ENCODE measurements at regions of chr2 and their contacts with region 1.

Region 1: GRCh38 chr2:24792874-24793760 is at the starts of genes CENPO and PTRHD1:
- DNase-seq: peak; percentile 95 to 98 (median 97)
- ATAC-seq: peak; percentile 98 to 99 (median 99)
- H3K4me3 ChIP-seq: peak within 1 kb of the TSS; percentile 30 to 97 (median 74)
- H3K27ac ChIP-seq: peak within 1 kb of the TSS; percentile 90 to 100 (median 98)
- H3K4me1 ChIP-seq: peaks cover 0 to 25% (median 5%) of the 10 kb centered on the region in 12 donors
- H3K27me3 ChIP-seq: no peaks in the 10 kb centered on the region
- CTCF ChIP-seq: peak; percentile 40 to 73 (median 62)
- POLR2A ChIP-seq: peak in 1 of 2 donors; percentile 62
- total RNA-seq, gene CENPO: 1.6 to 9.2 (median 2.7) TPM
- total RNA-seq, gene PTRHD1: 12.6 to 37.1 (median 31.1) TPM

Region 2: GRCh38 chr2:24771764-24772586 is 21.1 kb before region 1 on chr2:
- intact Hi-C with region 1: no loop called
- DNase-seq: no peak
- ATAC-seq: no peak
- H3K4me3 ChIP-seq: no peak overlapping the region
- H3K27ac ChIP-seq: no peak overlapping the region
- H3K4me1 ChIP-seq: peaks cover 0 to 12% (median 0%) of the 10 kb centered on the region in 12 donors
- H3K27me3 ChIP-seq: no peaks in the 10 kb centered on the region
- CTCF ChIP-seq: no peak
- POLR2A ChIP-seq: no peak

Region 3: DNA sequence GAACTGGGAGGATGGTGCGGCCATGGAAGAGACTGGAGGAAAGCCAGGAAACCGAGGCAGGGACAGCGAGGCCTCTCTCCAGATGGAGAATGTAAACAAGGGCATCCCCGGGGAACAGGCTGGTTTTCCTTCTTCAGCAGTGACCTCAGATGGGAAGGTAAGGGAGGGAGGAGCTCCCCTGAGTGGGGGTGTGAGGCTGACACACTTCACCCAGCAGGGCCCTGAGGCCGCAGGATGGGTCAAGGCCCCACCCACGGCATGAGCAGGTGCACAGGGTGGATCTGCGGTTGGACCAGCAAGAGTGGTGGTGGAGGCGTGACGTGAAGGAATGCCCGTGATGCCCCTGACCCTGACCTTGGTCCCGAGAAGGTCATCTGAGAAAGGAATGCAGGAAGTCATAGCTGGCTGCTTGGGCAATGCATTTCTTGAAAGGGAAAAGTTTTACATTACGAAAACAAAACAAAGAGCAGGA is 78.8 kb after region 1 on chr2:
- intact Hi-C with region 1: no loop called
- DNase-seq: peak in 2 of 5 donors; percentile 43 to 66
- ATAC-seq: peak in 3 of 4 donors; percentile 30 to 59 (median 41)
- H3K4me3 ChIP-seq: no peak overlapping the region
- H3K27ac ChIP-seq: peak overlapping the region in 10 of 12 donors; percentile 10 to 81 (median 48)
- H3K4me1 ChIP-seq: peaks cover 0 to 37% (median 10%) of the 10 kb centered on the region in 12 donors
- H3K27me3 ChIP-seq: no peaks in the 10 kb centered on the region
- CTCF ChIP-seq: no peak
- POLR2A ChIP-seq: no peak

Region 4: DNA sequence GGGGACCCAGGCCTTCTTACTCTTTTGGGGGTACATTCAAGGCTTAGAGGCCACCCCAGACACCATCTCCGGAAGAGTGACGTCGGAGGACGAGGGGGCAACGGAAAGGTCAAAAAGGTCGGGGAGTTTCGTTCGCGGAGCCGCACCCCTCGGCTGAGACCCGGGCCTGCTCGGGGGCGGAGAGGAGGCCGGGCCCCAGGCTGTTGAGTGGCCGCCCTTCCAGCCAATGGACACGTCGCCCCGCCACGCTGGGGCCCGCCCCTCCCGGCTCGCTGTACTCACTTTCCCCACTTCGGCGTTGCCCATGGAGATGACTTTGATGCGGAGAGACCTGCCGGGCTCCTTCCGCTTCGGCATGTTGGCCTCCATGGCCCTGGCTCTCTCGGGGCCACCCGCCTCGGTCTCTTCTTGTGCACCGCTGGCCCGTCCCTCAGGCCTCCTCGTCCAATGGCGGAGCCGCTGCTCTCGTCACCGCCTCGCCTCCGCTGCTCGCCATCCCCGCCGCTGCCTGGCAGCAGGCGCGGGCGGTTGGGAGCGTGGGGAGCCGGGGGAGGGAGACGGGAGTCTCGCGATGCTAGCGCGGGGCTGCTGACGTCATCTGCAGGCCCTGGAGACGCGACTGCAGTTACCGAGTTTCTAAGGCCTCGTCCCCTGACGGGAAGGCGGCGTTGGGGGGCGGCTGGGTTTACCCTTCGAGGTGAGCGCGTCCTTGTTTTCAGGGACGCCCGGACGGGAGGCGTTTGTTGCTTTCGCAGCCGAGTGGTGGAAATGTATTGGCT is 178.6 kb after region 1 on chr2 and contains the start of gene DNAJC27:
- intact Hi-C with region 1: loop called in 1 of 10 experiments (anchors 5 kb)
- DNase-seq: peak; percentile 98 to 99 (median 99)
- ATAC-seq: peak; percentile 95 to 97 (median 96)
- H3K4me3 ChIP-seq: peak within 1 kb of the TSS; percentile 70 to 94 (median 82)
- H3K27ac ChIP-seq: peak within 1 kb of the TSS; percentile 95 to 99 (median 98)
- H3K4me1 ChIP-seq: peaks cover 0 to 23% (median 13%) of the 10 kb centered on the region in 12 donors
- H3K27me3 ChIP-seq: no peaks in the 10 kb centered on the region
- CTCF ChIP-seq: no peak
- POLR2A ChIP-seq: peak; percentile 53 to 95
- total RNA-seq, gene DNAJC27: 5.1 to 13.6 (median 9.1) TPM